CD14-positive monocyte (primary cell): ENCODE measurements at regions of chr19 and their contacts with region 1.

Region 1: DNA sequence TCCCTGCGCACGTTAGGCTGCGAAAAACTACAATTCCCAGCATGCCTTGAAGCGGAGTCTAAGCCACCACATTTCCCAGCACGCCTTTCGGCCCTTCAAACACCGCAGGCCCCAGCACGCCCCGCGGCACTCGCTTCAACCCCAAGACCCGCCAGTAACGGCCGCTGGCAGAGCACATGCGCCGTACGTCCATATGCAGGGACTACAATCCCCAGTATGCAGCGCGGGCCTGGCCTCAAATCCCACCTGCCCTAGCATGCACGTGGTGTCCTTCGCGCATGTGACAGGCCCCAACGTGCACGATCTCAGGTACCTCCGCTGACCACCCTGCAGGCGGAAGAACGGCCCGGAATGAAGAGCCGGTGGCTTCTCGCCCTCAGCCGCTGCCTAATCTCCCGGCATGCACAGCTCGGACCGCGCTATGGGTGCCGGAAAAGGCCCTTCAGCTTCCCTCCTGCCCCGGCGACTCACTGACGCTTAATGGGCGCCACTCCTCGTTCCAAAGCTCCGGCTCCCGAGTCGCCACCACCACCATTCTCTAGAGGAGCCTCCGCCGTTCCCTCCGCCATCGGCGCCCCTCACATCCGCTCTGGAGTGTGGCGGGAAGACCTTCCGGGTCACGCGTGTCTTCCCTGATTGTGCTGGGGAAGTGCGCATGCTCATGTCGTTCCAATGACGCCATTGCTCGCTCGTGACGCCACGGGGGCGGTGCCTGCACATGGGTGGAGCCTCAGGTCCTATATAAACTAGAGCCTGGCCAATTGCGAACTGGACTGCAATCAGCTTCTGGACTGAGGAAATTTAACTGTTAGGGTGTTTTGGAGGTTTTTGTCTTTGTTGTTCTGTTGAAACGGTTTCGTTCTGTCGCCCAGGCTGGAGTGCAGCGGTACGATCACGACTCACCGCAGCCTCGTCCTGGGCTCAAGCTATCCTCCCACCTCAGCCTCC is at the start of gene DUS3L:
- DNase-seq: peak; percentile 96 to 97 (median 96)
- H3K4me3 ChIP-seq: peak within 1 kb of the TSS; percentile 47 to 86 (median 67)
- H3K4me3 Mint-ChIP-seq: peak within 1 kb of the TSS; percentile 100
- H3K27ac ChIP-seq: peak within 1 kb of the TSS; percentile 91 to 97
- H3K27ac Mint-ChIP-seq: peak within 1 kb of the TSS; percentile 100
- H3K4me1 ChIP-seq: peaks cover 6 to 21% of the 10 kb centered on the region in 2 donors
- H3K4me1 Mint-ChIP-seq: peaks cover 10% of the 10 kb centered on the region
- H3K27me3 ChIP-seq: no peaks in the 10 kb centered on the region
- H3K27me3 Mint-ChIP-seq: peaks cover 1 to 3% (median 3%) of the 10 kb centered on the region in 3 donors
- CTCF ChIP-seq: no peak
- polyA plus RNA-seq, gene DUS3L: 17.4 to 40.2 (median 23.4) TPM

Region 2: DNA sequence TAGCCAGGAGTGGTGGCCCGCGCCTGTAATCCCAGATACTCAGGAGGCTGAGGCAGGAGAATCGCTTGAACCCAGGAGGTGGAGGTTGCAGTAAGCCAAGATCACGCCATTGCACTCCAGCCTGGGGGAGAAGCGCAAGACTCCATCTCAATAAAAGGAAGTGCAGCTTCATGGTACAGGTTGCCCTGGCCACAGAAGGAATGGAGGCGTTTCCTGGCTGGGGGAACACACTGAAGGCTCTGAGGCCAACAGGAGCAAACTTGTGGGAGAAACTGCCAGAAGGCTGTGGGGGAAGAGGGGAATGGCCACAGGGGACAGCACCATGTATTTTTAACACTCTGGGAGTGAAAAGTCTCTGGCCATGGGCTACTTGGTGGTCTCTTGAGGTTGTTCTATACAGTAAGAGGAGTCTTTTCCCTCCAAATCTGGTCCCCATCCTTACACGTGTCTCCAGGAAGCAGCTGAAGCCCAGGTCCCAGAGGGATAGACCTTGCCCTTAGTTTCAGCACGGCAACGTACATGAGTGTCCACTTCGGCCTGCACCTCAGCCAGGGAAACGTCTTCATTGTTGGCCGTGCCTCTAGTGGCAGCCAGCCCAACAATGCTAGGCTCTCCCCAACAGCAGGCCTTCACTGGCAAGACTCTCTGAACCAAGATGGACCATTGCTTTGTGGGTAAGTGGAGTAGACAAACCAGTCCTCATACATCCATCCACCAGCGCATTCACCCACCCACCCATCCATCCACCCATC is 118.0 kb before region 1 on chr19:
- intact Hi-C with region 1: no loop called
- DNase-seq: no peak
- H3K4me3 ChIP-seq: no peak overlapping the region
- H3K4me3 Mint-ChIP-seq: no peak overlapping the region
- H3K27ac ChIP-seq: no peak overlapping the region
- H3K27ac Mint-ChIP-seq: peak overlapping the region in 3 of 7 donors; percentile 36 to 76 (median 43)
- H3K4me1 ChIP-seq: no peaks in the 10 kb centered on the region
- H3K4me1 Mint-ChIP-seq: peaks cover 2% of the 10 kb centered on the region
- H3K27me3 ChIP-seq: no peaks in the 10 kb centered on the region
- H3K27me3 Mint-ChIP-seq: no peaks in the 10 kb centered on the region
- CTCF ChIP-seq: no peak

Region 3: DNA sequence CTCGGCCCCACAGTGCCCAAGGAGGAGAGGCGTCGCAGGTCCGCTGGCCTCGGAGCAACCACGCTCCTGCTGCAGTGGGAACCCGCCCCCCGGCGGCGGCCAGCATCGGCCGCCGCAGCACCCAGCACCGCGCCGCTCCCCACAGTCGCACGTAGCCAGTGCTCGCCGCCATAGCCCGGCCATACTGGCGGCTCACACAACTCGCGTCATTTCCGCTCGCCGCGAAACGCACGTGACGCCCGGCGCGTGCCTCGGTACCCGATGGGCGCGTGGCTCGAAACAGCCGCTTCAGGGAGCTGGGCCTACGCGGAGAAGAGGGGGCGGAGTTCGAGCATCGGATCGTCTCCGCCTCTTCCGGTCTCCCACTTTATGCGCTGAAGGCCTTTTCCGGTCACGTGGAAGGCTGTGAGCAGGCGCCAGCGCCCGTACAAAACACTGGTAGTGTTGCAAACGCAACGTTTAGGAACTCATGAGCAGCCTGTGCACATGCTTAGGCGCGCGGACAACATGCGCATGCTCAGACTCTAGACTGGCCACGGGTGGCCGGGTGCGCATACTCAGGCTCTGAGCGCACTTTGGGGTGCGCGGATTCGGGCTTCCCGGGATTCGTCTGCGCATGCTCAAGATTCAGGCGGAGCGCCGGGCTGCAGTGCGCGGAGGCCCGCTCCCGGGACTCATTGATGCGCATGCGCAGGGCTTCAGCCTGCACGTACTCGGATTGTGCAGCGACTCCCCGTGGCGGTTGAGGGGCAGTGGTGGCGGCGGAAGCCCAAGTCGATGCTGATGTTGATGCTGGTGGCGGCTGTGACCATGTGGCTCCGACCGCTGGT is 70.7 kb before region 1 on chr19 and contains the starts of genes CATSPERD and LONP1:
- intact Hi-C with region 1: loop called (anchors 2 to 5 kb)
- DNase-seq: peak; percentile 99 to 100 (median 100)
- H3K4me3 ChIP-seq: peak within 1 kb of the TSS; percentile 59 to 82 (median 66)
- H3K4me3 Mint-ChIP-seq: peak within 1 kb of the TSS; percentile 81 to 90
- H3K27ac ChIP-seq: peak within 1 kb of the TSS; percentile 89 to 91
- H3K27ac Mint-ChIP-seq: peak within 1 kb of the TSS; percentile 90 to 95 (median 94)
- H3K4me1 ChIP-seq: peaks cover 20 to 29% of the 10 kb centered on the region in 2 donors
- H3K4me1 Mint-ChIP-seq: peaks cover 26% of the 10 kb centered on the region
- H3K27me3 ChIP-seq: no peaks in the 10 kb centered on the region
- H3K27me3 Mint-ChIP-seq: peaks cover 0 to 8% (median 2%) of the 10 kb centered on the region in 3 donors
- CTCF ChIP-seq: peak; percentile 87
- polyA plus RNA-seq, gene CATSPERD: not detected
- polyA plus RNA-seq, gene LONP1: 12.1 to 37.2 (median 13.8) TPM